ENCODE measurements at regions of chr1 and their contacts with region 1.

Region 1: GRCh38 chr1:184982002-184982954 is 8.0 kb upstream of the NIBAN1 start:
- DNase-seq: peak; percentile 40 to 83 (median 69)
- H3K4me3 ChIP-seq: no peak overlapping the region
- H3K4me3 Mint-ChIP-seq: no peak overlapping the region
- H3K27ac ChIP-seq: no peak overlapping the region
- H3K27ac Mint-ChIP-seq: peak overlapping the region in 3 of 8 donors; percentile 35 to 81 (median 47)
- H3K4me1 ChIP-seq: no peaks in the 10 kb centered on the region
- H3K4me1 Mint-ChIP-seq: peaks cover 7 to 9% (median 7%) of the 10 kb centered on the region in 3 donors
- H3K27me3 ChIP-seq: no peaks in the 10 kb centered on the region
- H3K27me3 Mint-ChIP-seq: peaks cover 3 to 6% of the 10 kb centered on the region in 2 donors

Region 2: GRCh38 chr1:184827600-184828368 is 154.5 kb before region 1 on chr1:
- CTCF ChIA-PET with region 1: interaction called, 11 read pairs
- POLR2A ChIA-PET with region 1: no interaction called
- DNase-seq: no peak
- H3K4me3 ChIP-seq: no peak overlapping the region
- H3K4me3 Mint-ChIP-seq: no peak overlapping the region
- H3K27ac ChIP-seq: no peak overlapping the region
- H3K27ac Mint-ChIP-seq: peak overlapping the region in 4 of 8 donors; percentile 22 to 76 (median 39)
- H3K4me1 ChIP-seq: no peaks in the 10 kb centered on the region
- H3K4me1 Mint-ChIP-seq: peaks cover 0 to 9% (median 2%) of the 10 kb centered on the region in 3 donors
- H3K27me3 ChIP-seq: no peaks in the 10 kb centered on the region
- H3K27me3 Mint-ChIP-seq: no peaks in the 10 kb centered on the region

Measured in CD8-positive, alpha-beta memory T cell (primary cell).